Aorta (tissue), 5 donors: ENCODE measurements at regions of chr1 and their contacts with region 1.

Region 1: DNA sequence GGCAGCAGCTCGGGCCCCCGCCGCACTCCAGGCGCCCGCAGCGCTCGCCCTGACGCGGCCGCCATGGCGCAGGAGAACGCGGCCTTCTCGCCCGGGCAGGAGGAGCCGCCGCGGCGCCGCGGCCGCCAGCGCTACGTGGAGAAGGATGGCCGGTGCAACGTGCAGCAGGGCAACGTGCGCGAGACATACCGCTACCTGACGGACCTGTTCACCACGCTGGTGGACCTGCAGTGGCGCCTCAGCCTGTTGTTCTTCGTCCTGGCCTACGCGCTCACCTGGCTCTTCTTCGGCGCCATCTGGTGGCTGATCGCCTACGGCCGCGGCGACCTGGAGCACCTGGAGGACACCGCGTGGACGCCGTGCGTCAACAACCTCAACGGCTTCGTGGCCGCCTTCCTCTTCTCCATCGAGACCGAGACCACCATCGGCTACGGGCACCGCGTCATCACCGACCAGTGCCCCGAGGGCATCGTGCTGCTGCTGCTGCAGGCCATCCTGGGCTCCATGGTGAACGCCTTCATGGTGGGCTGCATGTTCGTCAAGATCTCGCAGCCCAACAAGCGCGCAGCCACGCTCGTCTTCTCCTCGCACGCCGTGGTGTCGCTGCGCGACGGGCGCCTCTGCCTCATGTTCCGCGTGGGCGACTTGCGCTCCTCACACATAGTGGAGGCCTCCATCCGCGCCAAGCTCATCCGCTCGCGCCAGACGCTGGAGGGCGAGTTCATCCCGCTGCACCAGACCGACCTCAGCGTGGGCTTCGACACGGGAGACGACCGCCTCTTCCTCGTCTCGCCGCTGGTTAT is 2.8 kb downstream of the KCNJ9 start:
- DNase-seq: peak in 1 of 2 donors; percentile 82
- ATAC-seq: no peak
- H3K4me3 ChIP-seq: no peak overlapping the region
- H3K27ac ChIP-seq: no peak overlapping the region
- H3K4me1 ChIP-seq: peaks cover 0 to 3% of the 10 kb centered on the region in 2 donors
- H3K27me3 ChIP-seq: no peaks in the 10 kb centered on the region

Region 2: GRCh38 chr1:160046494-160047110 is 37.6 kb before region 1 on chr1:
- intact Hi-C with region 1: loop called in 1 of 2 experiments (anchors 5 kb)
- DNase-seq: no peak
- ATAC-seq: peak; percentile 79
- H3K4me3 ChIP-seq: no peak overlapping the region
- H3K27ac ChIP-seq: no peak overlapping the region
- H3K4me1 ChIP-seq: no peaks in the 10 kb centered on the region
- H3K27me3 ChIP-seq: no peaks in the 10 kb centered on the region

Region 3: GRCh38 chr1:160277330-160277729 is 193.2 kb after region 1 on chr1:
- intact Hi-C with region 1: no loop called
- DNase-seq: no peak
- ATAC-seq: no peak
- H3K4me3 ChIP-seq: no peak overlapping the region
- H3K27ac ChIP-seq: no peak overlapping the region
- H3K4me1 ChIP-seq: no peaks in the 10 kb centered on the region
- H3K27me3 ChIP-seq: no peaks in the 10 kb centered on the region